ENCODE measurements at regions of chr11 and their contacts with region 1.

Region 1: GRCh38 chr11:73307323-73308002 is 613 bp upstream of the ARHGEF17 start:
- DNase-seq: peak; percentile 97
- H3K4me3 Mint-ChIP-seq: peak overlapping the region; percentile 73
- H3K27ac Mint-ChIP-seq: peak overlapping the region; percentile 6
- H3K4me1 Mint-ChIP-seq: peaks cover 21% of the 10 kb centered on the region
- H3K27me3 Mint-ChIP-seq: no peaks in the 10 kb centered on the region
- CTCF ChIP-seq: peak; percentile 80

Region 2: GRCh38 chr11:73012121-73012863 is 295.2 kb before region 1 on chr11:
- CTCF ChIA-PET with region 1: no interaction called
- POLR2A ChIA-PET with region 1: no interaction called
- intact Hi-C with region 1: no loop called
- DNase-seq: no peak
- H3K4me3 Mint-ChIP-seq: no peak overlapping the region
- H3K27ac Mint-ChIP-seq: no peak overlapping the region
- H3K4me1 Mint-ChIP-seq: peaks cover 14% of the 10 kb centered on the region
- H3K27me3 Mint-ChIP-seq: no peaks in the 10 kb centered on the region
- CTCF ChIP-seq: no peak

Region 3: DNA sequence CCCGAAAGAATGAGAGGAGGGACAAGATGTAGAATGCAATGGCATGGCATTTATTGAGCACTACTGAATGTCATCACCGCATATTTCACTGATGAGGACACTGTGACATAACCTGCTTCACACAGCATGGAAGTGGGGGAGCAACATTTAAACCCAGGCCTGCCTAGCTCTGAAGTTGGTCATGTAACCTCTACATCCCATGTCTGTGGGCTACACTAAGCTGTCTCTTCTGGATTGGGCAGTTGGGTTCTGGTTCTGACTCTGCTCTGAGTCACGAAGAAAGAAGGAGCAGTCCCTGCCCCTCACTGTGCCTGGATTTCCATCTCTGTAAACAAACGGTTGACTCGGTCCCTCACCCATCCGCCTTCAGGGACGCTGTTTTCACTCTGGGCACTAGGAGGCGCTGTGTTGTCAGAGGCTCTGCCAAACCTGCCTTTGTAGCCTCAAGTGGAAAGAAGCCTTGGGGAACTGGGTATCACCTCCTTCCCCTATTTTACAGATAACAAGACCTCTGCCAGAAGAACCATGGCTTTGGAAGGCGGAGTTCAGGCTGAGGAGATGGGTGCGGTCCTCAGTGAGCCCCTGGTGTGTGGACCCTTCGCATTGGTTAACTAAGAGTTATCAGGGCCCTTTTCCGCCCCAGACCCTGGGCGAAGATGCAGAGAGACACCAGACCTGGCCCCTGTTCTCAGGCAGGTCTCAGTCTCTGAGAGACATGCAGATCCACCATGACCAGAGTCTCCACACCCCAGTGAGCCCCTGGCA is 12.1 kb before region 1 on chr11:
- CTCF ChIA-PET with region 1: interaction called, 17 read pairs
- POLR2A ChIA-PET with region 1: interaction called, 5 read pairs
- intact Hi-C with region 1: no loop called
- DNase-seq: peak; percentile 80
- H3K4me3 Mint-ChIP-seq: no peak overlapping the region
- H3K27ac Mint-ChIP-seq: no peak overlapping the region
- H3K4me1 Mint-ChIP-seq: peaks cover 5% of the 10 kb centered on the region
- H3K27me3 Mint-ChIP-seq: no peaks in the 10 kb centered on the region
- CTCF ChIP-seq: peak; percentile 88

Region 4: DNA sequence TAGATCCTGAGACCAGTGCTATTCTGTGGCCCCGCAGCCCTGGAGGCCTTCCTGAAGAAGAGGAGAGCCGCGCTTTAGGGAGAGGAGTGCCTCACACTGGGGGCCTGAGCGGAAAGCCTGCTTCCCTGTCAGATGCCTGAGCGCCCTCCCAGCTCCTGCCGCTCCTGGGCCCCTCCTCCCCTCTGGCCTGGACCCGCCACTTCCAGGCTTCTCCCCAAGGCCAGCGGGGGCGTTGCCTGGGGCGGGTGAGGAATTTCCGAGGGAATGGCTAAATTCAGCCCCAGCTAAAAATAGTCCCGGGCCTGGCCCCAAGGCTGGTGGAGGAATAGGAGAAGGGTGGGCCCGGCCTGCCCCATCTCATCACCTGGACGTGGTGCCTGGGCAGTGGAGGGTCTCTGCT is 16.0 kb after region 1 on chr11:
- CTCF ChIA-PET with region 1: interaction called, 25 read pairs
- POLR2A ChIA-PET with region 1: interaction called, 9 read pairs
- intact Hi-C with region 1: no loop called
- DNase-seq: no peak
- H3K4me3 Mint-ChIP-seq: no peak overlapping the region
- H3K27ac Mint-ChIP-seq: no peak overlapping the region
- H3K4me1 Mint-ChIP-seq: peaks cover 9% of the 10 kb centered on the region
- H3K27me3 Mint-ChIP-seq: no peaks in the 10 kb centered on the region
- CTCF ChIP-seq: no peak

Region 5: GRCh38 chr11:73376160-73376802 is 68.8 kb after region 1 on chr11 and contains the start of gene RELT:
- CTCF ChIA-PET with region 1: interaction called, 8 read pairs
- POLR2A ChIA-PET with region 1: interaction called, 15 read pairs
- intact Hi-C with region 1: no loop called
- DNase-seq: peak; percentile 88
- H3K4me3 Mint-ChIP-seq: peak within 1 kb of the TSS; percentile 80
- H3K27ac Mint-ChIP-seq: peak within 1 kb of the TSS; percentile 29
- H3K4me1 Mint-ChIP-seq: peaks cover 18% of the 10 kb centered on the region
- H3K27me3 Mint-ChIP-seq: no peaks in the 10 kb centered on the region
- CTCF ChIP-seq: peak; percentile 90
- total RNA-seq, gene RELT: 5.8 and 8.4 TPM in 2 replicates

Region 6: GRCh38 chr11:73393479-73394380 is 86.3 kb after region 1 on chr11:
- CTCF ChIA-PET with region 1: interaction called, 5 read pairs
- POLR2A ChIA-PET with region 1: interaction called, 3 read pairs
- intact Hi-C with region 1: loop called (anchors 1 kb)
- DNase-seq: peak; percentile 78
- H3K4me3 Mint-ChIP-seq: no peak overlapping the region
- H3K27ac Mint-ChIP-seq: no peak overlapping the region
- H3K4me1 Mint-ChIP-seq: peaks cover 14% of the 10 kb centered on the region
- H3K27me3 Mint-ChIP-seq: no peaks in the 10 kb centered on the region
- CTCF ChIP-seq: peak; percentile 55

Measured in MCF 10A (cell line).